ENCODE measurements at regions of chr1 and their contacts with region 1.

Region 1: DNA sequence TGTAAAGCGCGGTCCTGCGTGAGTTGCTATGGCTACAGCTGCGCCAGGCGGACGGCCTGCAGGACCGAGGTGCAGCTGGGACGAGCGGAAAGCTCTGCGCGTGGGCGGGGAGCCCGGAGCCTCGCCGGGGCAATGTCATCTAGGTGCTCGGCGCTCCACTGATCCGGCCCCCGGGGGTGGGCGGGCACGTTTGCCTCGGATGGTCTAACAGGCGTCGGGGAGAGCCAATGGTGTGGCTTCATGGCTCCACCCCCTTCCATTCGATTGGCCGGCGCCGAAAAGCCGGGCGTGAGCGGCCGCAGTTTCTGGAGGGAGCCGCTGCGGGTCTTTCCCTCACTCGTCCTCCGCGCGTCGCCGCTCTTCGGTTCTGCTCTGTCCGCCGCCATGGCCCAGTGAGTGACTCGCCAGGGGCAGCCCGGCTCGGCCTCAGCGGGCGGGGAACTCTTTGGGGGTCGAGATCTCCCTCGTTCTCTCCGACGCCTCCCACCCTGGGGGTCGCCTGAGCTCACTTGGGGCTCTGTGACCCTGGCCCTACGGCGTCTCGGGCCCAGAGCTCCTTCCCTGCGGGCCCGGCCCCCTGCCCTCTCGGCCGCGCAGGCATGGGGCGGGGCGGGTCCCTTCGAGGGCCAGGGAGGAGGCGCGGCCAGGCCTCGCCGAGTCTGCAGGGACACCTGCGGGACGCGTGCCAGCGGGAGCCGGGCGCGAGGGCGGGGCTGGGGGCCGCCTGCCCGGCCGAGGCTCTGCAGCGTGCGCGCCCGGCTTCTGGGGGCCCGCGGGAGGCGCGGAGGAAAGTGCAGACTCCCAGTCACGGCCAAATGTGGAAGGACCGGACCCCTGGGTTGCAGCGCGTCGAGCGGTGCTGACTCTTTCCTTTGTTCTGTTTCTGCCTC is at the start of gene PGD:
- DNase-seq: peak; percentile 98
- H3K4me3 ChIP-seq: peak within 1 kb of the TSS; percentile 93
- H3K27ac ChIP-seq: peak within 1 kb of the TSS; percentile 56
- H3K4me1 ChIP-seq: peaks cover 13% of the 10 kb centered on the region
- CTCF ChIP-seq: no peak; the same call in 1 of the 2 replicates
- total RNA-seq, gene PGD: 50.3 and 69.3 TPM in 2 replicates

Region 2: GRCh38 chr1:10387413-10388079 is 11.4 kb before region 1 on chr1:
- CTCF ChIA-PET with region 1: interaction called, 3 read pairs
- POLR2A ChIA-PET with region 1: interaction called, 22 read pairs
- intact Hi-C with region 1: loop called (anchors 1 kb)
- DNase-seq: no peak
- H3K4me3 ChIP-seq: peak overlapping the region; percentile 22
- H3K27ac ChIP-seq: peak overlapping the region; percentile 23
- H3K4me1 ChIP-seq: peaks cover 16% of the 10 kb centered on the region
- CTCF ChIP-seq: no peak

Region 3: DNA sequence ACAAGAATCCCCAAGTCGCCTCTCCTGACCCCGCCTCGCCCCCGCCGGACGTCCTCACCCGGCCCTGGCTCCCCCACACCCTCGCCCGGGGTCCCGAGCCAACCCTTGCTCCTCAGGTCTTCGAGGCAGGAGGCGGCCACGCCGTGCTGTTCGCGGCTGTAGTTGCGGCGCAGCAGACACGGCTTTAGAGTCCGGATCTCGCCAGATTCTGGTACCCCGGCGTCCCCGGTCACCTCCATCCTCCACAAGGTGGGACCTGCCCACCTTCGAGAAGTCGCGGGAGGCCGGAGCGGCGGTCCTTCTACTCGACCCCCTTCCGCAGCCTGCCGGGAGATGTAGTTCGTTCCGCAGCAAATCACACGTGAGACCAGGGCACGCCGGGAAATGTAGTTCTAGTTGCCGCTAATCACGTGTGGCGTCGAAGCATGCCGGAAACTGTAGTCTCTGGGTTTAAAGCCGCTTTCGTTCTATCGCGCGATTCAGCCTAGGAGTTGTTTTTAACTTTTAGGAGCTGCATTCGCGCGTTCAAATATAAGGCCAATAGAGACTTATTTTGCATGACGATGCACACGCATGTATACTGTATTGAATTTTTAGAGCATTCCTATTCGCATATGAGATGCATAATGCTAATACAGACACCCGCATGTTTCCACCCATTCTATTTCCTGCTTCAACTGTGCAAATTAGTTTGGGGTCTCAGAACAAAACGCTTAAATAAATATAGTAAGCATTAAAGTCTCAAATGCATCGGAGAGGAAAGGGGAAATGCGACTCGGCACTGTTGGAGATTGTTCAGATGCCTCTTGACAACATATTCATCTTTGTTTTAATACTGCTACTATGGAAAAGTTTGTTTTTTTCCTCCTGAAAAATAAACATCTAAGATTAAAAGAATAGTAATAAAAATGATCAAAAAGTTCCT is 73.5 kb after region 1 on chr1 and contains the start of gene DFFA:
- CTCF ChIA-PET with region 1: no interaction called
- POLR2A ChIA-PET with region 1: no interaction called
- intact Hi-C with region 1: loop called (anchors 2 kb)
- DNase-seq: peak; percentile 98
- H3K4me3 ChIP-seq: peak within 1 kb of the TSS; percentile 85
- H3K27ac ChIP-seq: peak within 1 kb of the TSS; percentile 96
- H3K4me1 ChIP-seq: peaks cover 32% of the 10 kb centered on the region
- CTCF ChIP-seq: 0 out of 2 replicates have a peak, but pooled peaks have one; percentile 13
- total RNA-seq, gene DFFA: 58.4 and 64.6 TPM in 2 replicates

Region 4: GRCh38 chr1:11501558-11501897 is 1102.5 kb after region 1 on chr1:
- CTCF ChIA-PET with region 1: no interaction called
- POLR2A ChIA-PET with region 1: no interaction called
- intact Hi-C with region 1: no loop called
- DNase-seq: no peak
- H3K4me3 ChIP-seq: no peak overlapping the region
- H3K27ac ChIP-seq: no peak overlapping the region
- H3K4me1 ChIP-seq: no peaks in the 10 kb centered on the region
- CTCF ChIP-seq: no peak